CD8-positive, alpha-beta T cell (primary cell): ENCODE measurements at regions of chr11 and their contacts with region 1.

Region 1: GRCh38 chr11:13772223-13773046 is 104.0 kb downstream of the FAR1 start:
- DNase-seq: peak in 4 of 9 experiments; percentile 21 to 84 (median 60)
- ATAC-seq: peak; percentile 66
- H3K4me3 ChIP-seq: no peak overlapping the region
- H3K4me3 Mint-ChIP-seq: no peak overlapping the region
- H3K27ac ChIP-seq: no peak overlapping the region
- H3K27ac Mint-ChIP-seq: no peak overlapping the region
- H3K4me1 ChIP-seq: no peaks in the 10 kb centered on the region
- H3K4me1 Mint-ChIP-seq: peaks cover 3% of the 10 kb centered on the region
- H3K27me3 ChIP-seq: no peaks in the 10 kb centered on the region
- H3K27me3 Mint-ChIP-seq: peaks cover 6% of the 10 kb centered on the region
- CTCF ChIP-seq: peak; percentile 75

Region 2: DNA sequence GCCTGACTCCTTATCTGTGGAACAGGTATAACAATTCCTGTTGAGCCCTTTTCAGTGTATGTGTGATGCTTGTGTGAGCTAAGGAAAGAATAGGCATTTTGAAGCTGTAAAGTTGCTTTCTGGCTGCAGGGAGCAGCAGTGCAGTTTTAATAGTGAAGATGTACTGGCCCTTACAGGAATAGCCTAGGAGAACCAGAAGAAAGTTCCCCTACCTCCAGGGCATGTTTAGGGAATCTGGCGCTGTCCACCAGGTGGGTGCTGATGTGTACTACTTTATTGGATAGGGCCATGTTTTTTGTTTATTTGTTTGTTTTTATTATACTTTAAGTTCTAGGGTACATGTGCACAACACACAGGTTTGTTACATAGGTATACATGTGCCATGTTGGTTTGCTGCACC is 483.4 kb before region 1 on chr11:
- CTCF ChIA-PET with region 1: no interaction called
- POLR2A ChIA-PET with region 1: no interaction called
- intact Hi-C with region 1: no loop called
- DNase-seq: no peak
- ATAC-seq: no peak
- H3K4me3 ChIP-seq: no peak overlapping the region
- H3K4me3 Mint-ChIP-seq: no peak overlapping the region
- H3K27ac ChIP-seq: no peak overlapping the region
- H3K27ac Mint-ChIP-seq: no peak overlapping the region
- H3K4me1 ChIP-seq: peaks cover 36% of the 10 kb centered on the region
- H3K4me1 Mint-ChIP-seq: peaks cover 93% of the 10 kb centered on the region
- H3K27me3 ChIP-seq: peaks cover 0 to 3% of the 10 kb centered on the region in 2 experiments
- H3K27me3 Mint-ChIP-seq: no peaks in the 10 kb centered on the region
- CTCF ChIP-seq: no peak

Region 3: GRCh38 chr11:13761712-13762111 is 10.7 kb before region 1 on chr11:
- CTCF ChIA-PET with region 1: interaction called, 32 read pairs
- POLR2A ChIA-PET with region 1: no interaction called
- intact Hi-C with region 1: no loop called
- DNase-seq: no peak
- ATAC-seq: no peak
- H3K4me3 ChIP-seq: no peak overlapping the region
- H3K4me3 Mint-ChIP-seq: no peak overlapping the region
- H3K27ac ChIP-seq: no peak overlapping the region
- H3K27ac Mint-ChIP-seq: no peak overlapping the region
- H3K4me1 ChIP-seq: no peaks in the 10 kb centered on the region
- H3K4me1 Mint-ChIP-seq: no peaks in the 10 kb centered on the region
- H3K27me3 ChIP-seq: no peaks in the 10 kb centered on the region
- H3K27me3 Mint-ChIP-seq: no peaks in the 10 kb centered on the region
- CTCF ChIP-seq: no peak

Region 4: GRCh38 chr11:13889552-13890249 is 117.3 kb after region 1 on chr11:
- CTCF ChIA-PET with region 1: no interaction called
- POLR2A ChIA-PET with region 1: no interaction called
- intact Hi-C with region 1: no loop called
- DNase-seq: no peak
- ATAC-seq: no peak
- H3K4me3 ChIP-seq: no peak overlapping the region
- H3K4me3 Mint-ChIP-seq: no peak overlapping the region
- H3K27ac ChIP-seq: no peak overlapping the region
- H3K27ac Mint-ChIP-seq: no peak overlapping the region
- H3K4me1 ChIP-seq: no peaks in the 10 kb centered on the region
- H3K4me1 Mint-ChIP-seq: peaks cover 7% of the 10 kb centered on the region
- H3K27me3 ChIP-seq: no peaks in the 10 kb centered on the region
- H3K27me3 Mint-ChIP-seq: no peaks in the 10 kb centered on the region
- CTCF ChIP-seq: no peak

Region 5: DNA sequence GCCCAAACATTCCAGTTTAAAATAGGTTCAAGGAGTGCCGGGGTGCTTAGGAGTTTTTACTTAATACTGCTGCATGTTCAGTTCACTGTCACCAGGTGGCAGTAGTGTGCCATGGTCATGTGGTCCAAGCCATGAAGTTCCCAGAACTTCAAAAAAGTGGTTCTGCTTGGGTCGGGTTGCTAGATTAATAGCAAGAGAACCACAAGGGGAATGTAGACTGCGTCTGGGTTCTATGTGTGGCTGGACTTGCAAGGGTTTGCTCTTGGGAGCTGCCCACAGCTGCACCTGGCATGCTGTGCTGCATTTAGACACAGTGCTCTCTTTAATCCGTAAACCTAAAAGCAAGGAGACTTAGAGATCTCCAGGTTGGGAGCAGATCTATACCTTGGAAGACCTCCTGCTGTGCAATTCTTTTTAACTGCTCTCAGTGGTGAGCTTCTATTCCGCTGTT is 183.6 kb after region 1 on chr11:
- CTCF ChIA-PET with region 1: interaction called, 26 read pairs
- POLR2A ChIA-PET with region 1: no interaction called
- intact Hi-C with region 1: loop called (anchors 1 kb)
- DNase-seq: peak in 8 of 9 experiments; percentile 39 to 86 (median 66)
- ATAC-seq: peak; percentile 92
- H3K4me3 ChIP-seq: no peak overlapping the region
- H3K4me3 Mint-ChIP-seq: no peak overlapping the region
- H3K27ac ChIP-seq: no peak overlapping the region
- H3K27ac Mint-ChIP-seq: no peak overlapping the region
- H3K4me1 ChIP-seq: peaks cover 6% of the 10 kb centered on the region
- H3K4me1 Mint-ChIP-seq: no peaks in the 10 kb centered on the region
- H3K27me3 ChIP-seq: peaks cover 0 to 3% of the 10 kb centered on the region in 2 experiments
- H3K27me3 Mint-ChIP-seq: peaks cover 9% of the 10 kb centered on the region
- CTCF ChIP-seq: peak; percentile 97

Region 6: DNA sequence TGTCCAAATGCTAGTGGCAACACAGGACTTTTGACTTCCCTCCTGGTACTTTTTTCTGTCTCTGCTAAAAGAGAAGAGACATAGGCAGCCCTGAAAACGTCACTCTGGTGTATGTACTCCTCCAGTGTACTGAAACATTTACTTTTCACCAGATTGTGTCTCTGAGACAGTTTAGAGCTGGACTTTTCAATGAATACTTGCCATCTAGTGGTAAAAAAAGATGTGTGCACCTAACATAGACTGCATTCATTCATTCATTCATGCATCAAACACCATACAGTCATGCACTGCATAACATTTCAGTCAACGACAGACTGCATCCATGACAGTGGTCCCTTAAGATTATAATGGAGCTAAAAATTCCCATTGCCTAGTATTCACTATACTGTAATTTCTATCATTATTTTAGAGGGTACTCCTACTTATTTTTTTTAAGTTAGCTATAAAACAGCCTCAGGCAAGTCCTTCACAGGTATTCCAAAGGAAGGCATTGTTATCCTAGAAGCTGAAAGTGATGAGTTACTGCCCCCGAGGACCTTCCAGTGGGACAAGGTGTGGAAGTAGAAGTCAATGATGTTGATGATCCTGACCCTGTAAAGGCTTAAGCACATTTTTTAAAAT is 376.3 kb after region 1 on chr11:
- CTCF ChIA-PET with region 1: interaction called, 94 read pairs
- POLR2A ChIA-PET with region 1: interaction called, 5 read pairs
- intact Hi-C with region 1: loop called (anchors 1 kb)
- DNase-seq: peak in 2 of 9 experiments; percentile 44 to 65
- ATAC-seq: peak; percentile 94
- H3K4me3 ChIP-seq: no peak overlapping the region
- H3K4me3 Mint-ChIP-seq: no peak overlapping the region
- H3K27ac ChIP-seq: no peak overlapping the region
- H3K27ac Mint-ChIP-seq: no peak overlapping the region
- H3K4me1 ChIP-seq: no peaks in the 10 kb centered on the region
- H3K4me1 Mint-ChIP-seq: peaks cover 3% of the 10 kb centered on the region
- H3K27me3 ChIP-seq: no peaks in the 10 kb centered on the region
- H3K27me3 Mint-ChIP-seq: no peaks in the 10 kb centered on the region
- CTCF ChIP-seq: peak; percentile 75

Region 7: DNA sequence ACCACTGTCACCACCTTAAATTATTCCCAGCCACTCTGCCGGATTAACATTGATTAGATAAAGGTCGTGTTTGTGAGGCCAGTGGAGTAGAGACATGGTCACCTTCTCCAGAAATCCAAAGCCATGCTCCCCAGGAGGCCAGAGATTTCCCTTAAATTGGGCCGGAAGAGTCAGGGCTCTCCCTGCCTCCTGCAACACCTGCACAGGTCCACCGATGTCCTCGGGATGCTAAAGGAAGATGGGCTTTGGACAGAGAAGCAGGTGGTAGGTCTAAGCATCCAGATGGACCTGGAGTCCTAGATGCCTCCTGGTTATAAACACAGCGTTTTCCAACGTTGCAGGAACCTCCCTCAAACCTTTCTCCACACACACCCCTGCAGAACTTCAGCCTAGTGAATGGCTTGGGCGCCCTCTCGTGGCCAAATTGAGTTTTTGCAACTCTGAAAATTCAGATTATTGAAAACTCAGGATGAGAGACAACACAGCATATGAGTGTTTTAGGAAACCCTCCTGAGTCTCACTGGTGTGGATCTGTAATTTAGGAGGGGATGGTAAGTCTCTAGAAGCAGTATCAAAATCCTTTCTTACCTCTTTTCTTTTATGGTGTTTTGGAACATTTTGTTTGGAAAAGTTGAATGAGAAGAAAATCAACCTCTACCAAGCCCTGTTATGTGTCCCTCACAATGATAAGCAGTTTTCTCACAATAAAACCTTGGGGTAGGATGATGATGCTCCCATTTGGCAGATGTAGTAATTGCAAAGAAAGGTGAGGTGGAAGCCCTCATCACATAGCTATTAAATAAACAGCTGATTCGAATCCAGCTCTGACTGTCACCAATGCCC is 476.9 kb after region 1 on chr11:
- CTCF ChIA-PET with region 1: interaction called, 130 read pairs
- POLR2A ChIA-PET with region 1: interaction called, 3 read pairs
- intact Hi-C with region 1: loop called (anchors 1 kb)
- DNase-seq: peak; percentile 37 to 85 (median 73)
- ATAC-seq: peak; percentile 61
- H3K4me3 ChIP-seq: no peak overlapping the region
- H3K4me3 Mint-ChIP-seq: peak overlapping the region; percentile 61
- H3K27ac ChIP-seq: no peak overlapping the region
- H3K27ac Mint-ChIP-seq: no peak overlapping the region
- H3K4me1 ChIP-seq: peaks cover 16% of the 10 kb centered on the region
- H3K4me1 Mint-ChIP-seq: peaks cover 22% of the 10 kb centered on the region
- H3K27me3 ChIP-seq: no peaks in the 10 kb centered on the region
- H3K27me3 Mint-ChIP-seq: no peaks in the 10 kb centered on the region
- CTCF ChIP-seq: peak; percentile 98

Region 8: DNA sequence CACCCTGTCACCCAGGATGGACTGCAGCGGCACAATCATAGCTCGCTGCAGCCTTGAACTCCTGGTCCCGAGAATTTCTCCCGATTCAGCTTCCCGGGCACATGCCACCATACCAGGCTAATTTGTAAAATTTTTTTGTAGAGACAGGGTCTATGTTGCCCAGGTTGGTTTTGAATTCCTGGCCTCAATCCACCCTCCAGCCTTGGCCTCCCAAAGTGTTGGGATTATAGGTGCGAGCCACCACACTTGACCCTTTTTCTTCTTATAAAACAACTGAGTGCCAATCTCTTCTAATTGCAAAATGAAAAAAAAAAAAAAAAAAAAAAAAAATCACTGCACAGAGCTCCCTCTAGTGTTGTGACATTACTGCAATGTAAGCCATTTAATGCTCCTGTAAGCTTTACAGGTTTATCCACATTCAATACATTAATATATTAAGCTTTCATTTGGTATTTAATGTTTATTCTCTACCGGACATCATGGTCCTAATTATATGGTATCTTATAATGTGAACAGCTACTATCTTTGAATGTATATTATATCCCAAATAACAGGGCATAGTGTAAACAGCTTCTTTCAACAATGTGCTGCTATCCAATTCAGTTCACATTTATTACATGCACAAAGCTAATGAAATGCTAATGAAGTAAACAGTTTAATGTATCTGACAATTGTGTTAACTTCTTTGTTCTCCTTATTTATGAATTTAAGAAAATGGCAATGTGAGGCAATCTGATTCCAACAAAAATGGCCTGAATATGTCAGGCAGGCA is 682.6 kb after region 1 on chr11:
- CTCF ChIA-PET with region 1: interaction called, 23 read pairs
- POLR2A ChIA-PET with region 1: no interaction called
- intact Hi-C with region 1: loop called (anchors 1 kb)
- DNase-seq: peak in 2 of 9 experiments; percentile 50 to 61
- ATAC-seq: peak; percentile 52
- H3K4me3 ChIP-seq: no peak overlapping the region
- H3K4me3 Mint-ChIP-seq: no peak overlapping the region
- H3K27ac ChIP-seq: no peak overlapping the region
- H3K27ac Mint-ChIP-seq: no peak overlapping the region
- H3K4me1 ChIP-seq: no peaks in the 10 kb centered on the region
- H3K4me1 Mint-ChIP-seq: no peaks in the 10 kb centered on the region
- H3K27me3 ChIP-seq: no peaks in the 10 kb centered on the region
- H3K27me3 Mint-ChIP-seq: no peaks in the 10 kb centered on the region
- CTCF ChIP-seq: peak; percentile 75